ENCODE measurements at regions of chr4 and their contacts with region 1.

Region 1: GRCh38 chr4:41661442-41662076 is 87.0 kb downstream of the PHOX2B start:
- DNase-seq: no peak
- ATAC-seq: peak; percentile 56

Region 2: DNA sequence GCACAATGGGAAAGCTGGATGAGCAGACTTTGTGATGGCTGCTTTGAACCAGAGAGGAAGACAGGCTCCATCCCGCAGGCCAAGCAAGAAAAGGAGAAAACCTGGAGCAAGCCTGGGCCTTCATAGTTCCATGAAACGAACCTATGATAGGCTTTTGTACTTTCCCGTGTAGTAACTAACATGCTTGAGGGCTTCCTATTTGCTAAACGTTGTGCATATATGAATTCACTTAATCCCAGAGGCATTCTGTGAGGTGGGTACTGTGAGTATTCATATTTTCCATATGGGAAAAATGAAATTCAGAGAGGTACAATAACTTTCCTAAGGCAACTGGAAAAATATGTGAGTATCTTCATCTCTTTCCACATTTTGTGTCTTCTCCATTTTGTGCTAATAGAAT is 433.7 kb before region 1 on chr4:
- intact Hi-C with region 1: no loop called
- DNase-seq: no peak
- ATAC-seq: no peak

Region 3: DNA sequence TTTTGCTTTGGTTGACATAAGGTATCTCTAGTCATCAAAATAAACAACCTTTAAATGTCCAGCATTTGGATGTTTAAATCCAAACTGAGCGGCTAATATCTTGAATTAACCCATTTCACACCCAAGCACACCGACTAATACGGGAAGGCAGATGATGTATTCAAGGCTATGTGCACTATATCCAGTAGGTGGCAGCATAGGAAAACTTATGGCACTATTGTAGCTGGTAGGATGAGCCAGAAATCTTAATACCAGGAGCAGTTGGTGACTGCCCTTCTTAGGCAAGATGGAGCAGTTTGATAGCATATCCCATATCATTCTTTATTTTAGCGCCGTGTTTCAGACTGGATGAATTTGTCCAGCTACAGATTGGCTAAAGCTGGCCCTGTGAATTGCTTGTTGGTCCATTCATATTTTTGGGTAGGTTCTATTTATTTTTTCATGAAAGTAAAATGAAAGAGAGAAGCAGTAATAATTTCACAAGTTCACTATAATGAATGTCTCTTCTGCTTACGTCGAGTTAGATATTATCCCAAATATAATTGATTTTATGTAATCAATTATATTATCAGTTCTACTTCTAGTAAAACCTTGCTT is 380.4 kb before region 1 on chr4:
- intact Hi-C with region 1: loop called (anchors 2 kb)
- DNase-seq: no peak
- ATAC-seq: peak; percentile 93

Region 4: DNA sequence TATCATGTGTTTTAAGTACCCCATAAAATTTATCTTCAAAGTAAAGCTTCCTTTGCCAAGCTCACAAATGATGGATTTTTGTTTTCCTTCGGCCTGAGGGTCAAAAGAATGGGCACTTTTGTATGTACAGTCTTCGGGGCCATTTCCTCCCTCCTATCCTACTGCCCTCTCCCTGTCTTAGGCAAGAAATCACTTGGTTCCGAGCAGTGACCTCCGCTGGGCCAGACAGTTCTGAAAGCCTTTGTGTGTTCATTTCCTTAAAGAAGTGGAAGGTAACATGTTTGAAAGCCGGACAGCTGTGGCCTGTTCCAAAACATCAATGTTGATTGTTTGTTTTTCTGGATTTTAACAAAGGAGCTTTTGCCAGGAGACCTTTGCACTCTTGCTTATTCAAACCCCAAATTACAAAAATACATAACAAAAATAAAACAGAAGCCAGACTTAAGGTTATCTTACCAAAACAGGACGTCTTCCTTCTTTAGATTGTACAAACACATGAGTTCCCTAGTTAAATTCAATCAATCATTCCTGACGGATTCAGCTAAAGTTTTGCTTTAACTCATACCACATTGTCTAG is 234.2 kb before region 1 on chr4:
- intact Hi-C with region 1: loop called (anchors 5 kb)
- DNase-seq: peak; percentile 22
- ATAC-seq: no peak